Gastrocnemius medialis (tissue), 4 donors: ENCODE measurements at regions of chr9 and their contacts with region 1.

Region 1: DNA sequence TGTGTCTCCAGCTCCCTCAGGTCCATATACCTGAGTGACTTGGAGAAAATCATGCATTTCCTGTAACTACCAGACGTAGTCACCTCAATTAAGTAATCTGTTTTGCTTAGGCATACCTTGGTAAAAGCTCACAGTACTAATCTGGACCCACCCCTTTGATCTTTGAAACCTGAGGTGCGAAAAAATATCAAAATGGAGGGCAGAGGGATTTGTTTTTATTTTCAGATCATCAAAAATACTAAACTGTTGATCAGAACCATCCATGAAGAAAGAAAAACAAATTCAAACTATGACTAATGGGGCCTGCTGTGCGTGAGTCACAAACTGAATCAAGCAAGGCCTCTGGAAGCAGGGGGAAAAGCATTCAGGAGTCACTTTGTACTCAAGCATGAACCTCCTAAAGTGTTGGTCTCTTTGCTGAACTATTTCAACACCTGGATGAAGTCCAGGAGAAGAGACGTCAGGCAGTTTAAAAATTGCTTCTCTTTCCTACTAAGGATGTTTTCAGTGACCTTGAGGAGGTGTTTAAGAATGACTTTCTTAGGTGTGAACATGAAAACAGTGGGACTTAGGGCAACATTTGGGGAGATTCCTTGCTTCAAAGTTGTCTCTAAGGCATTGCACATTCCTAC is 76.3 kb downstream of the MUSK start:
- DNase-seq: peak; percentile 56 to 74
- ATAC-seq: peak; percentile 87 to 88
- H3K4me3 ChIP-seq: no peak overlapping the region
- H3K27ac ChIP-seq: peak overlapping the region; percentile 83 to 88 (median 85)
- H3K4me1 ChIP-seq: peaks cover 16 to 31% of the 10 kb centered on the region in 2 donors
- H3K27me3 ChIP-seq: no peaks in the 10 kb centered on the region
- CTCF ChIP-seq: no peak
- POLR2A ChIP-seq: no peak

Region 2: GRCh38 chr9:110797611-110798010 is 52.7 kb after region 1 on chr9:
- in situ Hi-C with region 1: no loop called
- intact Hi-C with region 1: no loop called
- DNase-seq: no peak
- ATAC-seq: no peak
- H3K4me3 ChIP-seq: no peak overlapping the region
- H3K27ac ChIP-seq: no peak overlapping the region
- H3K4me1 ChIP-seq: no peaks in the 10 kb centered on the region
- H3K27me3 ChIP-seq: no peaks in the 10 kb centered on the region
- CTCF ChIP-seq: no peak
- POLR2A ChIP-seq: no peak

Region 3: GRCh38 chr9:110828264-110828663 is 83.4 kb after region 1 on chr9:
- in situ Hi-C with region 1: loop called in 1 of 4 experiments (anchors 25 kb)
- intact Hi-C with region 1: no loop called
- DNase-seq: peak; percentile 10 to 24
- ATAC-seq: no peak
- H3K4me3 ChIP-seq: no peak overlapping the region
- H3K27ac ChIP-seq: no peak overlapping the region
- H3K4me1 ChIP-seq: no peaks in the 10 kb centered on the region
- H3K27me3 ChIP-seq: no peaks in the 10 kb centered on the region
- CTCF ChIP-seq: no peak
- POLR2A ChIP-seq: no peak